Colonic mucosa (tissue), 4 donors: ENCODE measurements at regions of chr6 and their contacts with region 1.

Region 1: DNA sequence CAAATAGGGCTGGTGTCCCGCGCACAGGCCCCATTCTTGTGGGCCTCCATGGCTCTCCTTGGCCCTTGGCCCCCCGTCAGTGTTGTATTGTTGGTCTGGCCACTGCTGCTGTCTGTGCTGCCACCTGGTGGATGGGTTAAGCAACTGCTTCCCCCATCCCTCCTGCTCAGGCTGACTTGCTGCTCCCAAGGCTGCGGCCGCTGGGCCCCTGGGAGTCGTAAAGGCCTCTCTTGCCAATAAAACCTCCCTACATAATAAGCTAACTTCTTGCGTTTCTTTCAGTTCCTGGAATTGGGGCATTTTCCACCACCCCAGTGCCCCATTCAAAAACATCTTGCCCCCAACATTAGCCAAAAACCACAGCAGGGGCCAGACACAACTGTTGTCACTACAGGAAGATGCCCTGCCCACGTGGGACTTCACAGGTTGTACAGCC is 27.1 kb downstream of the CD83 start:
- DNase-seq: peak; percentile 66
- H3K4me3 ChIP-seq: no peak overlapping the region
- H3K27ac ChIP-seq: no peak overlapping the region
- H3K4me1 ChIP-seq: no peaks in the 10 kb centered on the region
- H3K27me3 ChIP-seq: no peaks in the 10 kb centered on the region
- CTCF ChIP-seq: peak; percentile 95

Region 2: DNA sequence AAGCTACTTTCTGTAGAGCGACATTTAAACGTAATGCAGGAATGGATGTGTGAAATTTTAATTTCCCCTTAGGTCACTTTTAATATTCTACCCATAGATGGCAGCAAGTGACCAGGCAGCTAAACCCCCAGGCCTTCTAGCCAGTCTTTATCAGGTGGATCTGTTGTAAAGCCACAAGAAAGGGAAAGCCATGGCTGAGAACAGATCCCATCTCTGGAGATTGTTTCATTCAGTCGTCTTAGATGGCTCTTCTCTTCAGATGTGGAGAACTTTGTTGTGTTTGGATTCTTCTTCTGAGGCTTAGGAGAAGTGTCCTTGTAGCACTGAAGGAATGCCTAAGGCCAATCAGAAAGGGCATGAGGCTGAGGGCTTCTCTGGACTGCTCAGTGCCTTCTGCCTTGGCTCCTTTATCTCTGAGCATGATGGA is 235.7 kb before region 1 on chr6:
- intact Hi-C with region 1: loop called (anchors 5 kb)
- DNase-seq: peak; percentile 48
- H3K4me3 ChIP-seq: no peak overlapping the region
- H3K27ac ChIP-seq: no peak overlapping the region
- H3K4me1 ChIP-seq: no peaks in the 10 kb centered on the region
- H3K27me3 ChIP-seq: no peaks in the 10 kb centered on the region
- CTCF ChIP-seq: peak; percentile 70